Posterior vena cava (tissue), 2 donors: ENCODE measurements at regions of chr3 and their contacts with region 1.

Region 1: DNA sequence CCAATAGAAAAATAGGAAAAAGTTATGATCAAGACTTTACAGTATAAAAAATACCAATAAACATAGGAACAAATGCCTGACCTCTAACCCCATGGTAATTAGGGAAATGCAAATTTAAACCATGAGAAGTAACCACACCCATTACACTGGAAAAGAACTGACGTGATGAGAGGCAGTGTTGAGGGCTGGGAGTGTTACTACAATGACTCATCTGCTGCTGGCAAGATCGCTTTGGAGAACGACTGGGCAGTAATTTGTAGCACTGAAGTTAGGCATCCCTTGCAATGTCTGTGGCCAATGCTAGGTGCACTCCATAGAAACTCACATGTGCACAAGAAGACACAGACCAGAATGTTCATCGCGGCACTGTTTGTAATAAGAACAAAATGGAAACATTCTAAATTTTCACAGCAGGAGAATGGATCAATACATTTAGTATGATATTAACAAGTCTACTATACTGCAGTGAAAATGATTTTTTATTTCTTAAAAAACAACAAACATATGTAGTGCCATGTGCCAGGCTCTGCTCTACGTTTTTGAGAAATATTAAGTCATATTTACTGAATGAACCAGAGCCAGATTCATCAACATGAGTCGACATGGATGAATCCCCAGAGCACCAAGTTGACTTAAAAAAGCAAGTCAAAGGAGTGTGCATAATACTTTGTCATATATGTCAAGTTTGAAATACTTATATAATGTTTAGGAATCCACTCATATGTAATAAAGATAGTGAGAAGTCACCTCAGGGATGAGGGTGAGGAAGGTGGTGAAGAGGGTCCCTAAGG is 37.6 kb upstream of the EPHB3 start:
- DNase-seq: no peak

Region 2: GRCh38 chr3:184362668-184363540 is 161.1 kb before region 1 on chr3:
- intact Hi-C with region 1: no loop called
- DNase-seq: peak; percentile 99

Region 3: GRCh38 chr3:184592371-184593219 is 68.6 kb after region 1 on chr3:
- intact Hi-C with region 1: loop called in 1 of 2 experiments (anchors 2 kb)
- DNase-seq: no peak